Naive thymus-derived CD4-positive, alpha-beta T cell (primary cell): ENCODE measurements at regions of chr11 and their contacts with region 1.

Region 1: GRCh38 chr11:47775240-47775869 is 8.2 kb upstream of the FNBP4 start:
- DNase-seq: no peak
- ATAC-seq: no peak
- H3K4me3 ChIP-seq: no peak overlapping the region
- H3K4me3 Mint-ChIP-seq: no peak overlapping the region
- H3K27ac ChIP-seq: no peak overlapping the region
- H3K27ac Mint-ChIP-seq: peak overlapping the region in 5 of 9 donors; percentile 5 to 59 (median 28)
- H3K4me1 ChIP-seq: no peaks in the 10 kb centered on the region
- H3K4me1 Mint-ChIP-seq: peaks cover 0 to 2% (median 0%) of the 10 kb centered on the region in 7 donors
- H3K27me3 ChIP-seq: no peaks in the 10 kb centered on the region
- H3K27me3 Mint-ChIP-seq: no peaks in the 10 kb centered on the region

Region 2: GRCh38 chr11:48150213-48150612 is 374.9 kb after region 1 on chr11:
- CTCF ChIA-PET with region 1: no interaction called
- POLR2A ChIA-PET with region 1: interaction called, 11 read pairs
- intact Hi-C with region 1: no loop called
- DNase-seq: no peak
- ATAC-seq: no peak
- H3K4me3 ChIP-seq: no peak overlapping the region
- H3K4me3 Mint-ChIP-seq: no peak overlapping the region
- H3K27ac ChIP-seq: no peak overlapping the region
- H3K27ac Mint-ChIP-seq: peak overlapping the region in 1 of 9 donors; percentile 24
- H3K4me1 ChIP-seq: no peaks in the 10 kb centered on the region
- H3K4me1 Mint-ChIP-seq: peaks cover 0 to 15% (median 0%) of the 10 kb centered on the region in 7 donors
- H3K27me3 ChIP-seq: no peaks in the 10 kb centered on the region
- H3K27me3 Mint-ChIP-seq: no peaks in the 10 kb centered on the region